ENCODE measurements at regions of chr7 and their contacts with region 1.

Region 1: DNA sequence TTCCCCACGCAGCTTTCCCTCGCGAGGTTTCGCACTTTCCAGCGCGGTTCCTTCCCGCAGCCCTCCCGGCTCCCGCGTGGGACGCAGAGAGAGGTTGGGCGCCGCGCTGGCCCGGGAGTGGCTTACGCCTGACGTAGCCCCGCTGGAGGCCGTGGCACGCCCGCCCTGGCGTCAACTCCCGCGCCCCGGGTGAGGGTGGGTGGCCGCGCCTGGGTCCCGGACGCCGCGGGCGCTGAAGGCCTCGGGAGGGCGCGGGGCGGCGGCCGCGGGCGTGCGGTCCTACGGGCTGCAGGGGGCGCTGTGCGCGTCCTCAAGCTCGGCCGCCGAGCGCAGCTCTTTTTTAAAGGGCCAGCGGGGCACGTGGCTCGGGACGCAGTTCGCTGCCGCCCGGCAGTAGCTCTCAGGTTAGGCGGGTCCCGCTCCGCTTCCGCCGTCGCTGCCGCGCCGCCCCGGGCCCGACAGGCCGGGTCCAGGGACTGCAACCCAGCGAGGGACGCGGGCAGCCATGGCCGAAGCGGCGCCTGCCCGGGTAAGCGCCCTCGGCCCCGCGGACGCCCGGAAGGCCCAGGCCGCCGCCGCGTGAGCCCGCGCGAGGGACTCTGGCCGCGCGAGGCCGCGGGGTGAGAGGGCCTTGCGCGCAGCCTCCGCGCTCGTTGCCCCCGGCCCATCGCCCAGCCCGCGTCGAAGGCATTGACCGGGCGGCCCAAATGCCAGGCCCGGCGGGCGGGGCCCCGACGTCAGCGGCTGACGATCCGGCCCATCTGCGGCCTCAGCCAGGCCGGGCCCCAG is at the start of gene ZNF783:
- DNase-seq: peak; percentile 16
- H3K4me3 ChIP-seq: peak within 1 kb of the TSS; percentile 63
- CTCF ChIP-seq: peak; percentile 66

Region 2: DNA sequence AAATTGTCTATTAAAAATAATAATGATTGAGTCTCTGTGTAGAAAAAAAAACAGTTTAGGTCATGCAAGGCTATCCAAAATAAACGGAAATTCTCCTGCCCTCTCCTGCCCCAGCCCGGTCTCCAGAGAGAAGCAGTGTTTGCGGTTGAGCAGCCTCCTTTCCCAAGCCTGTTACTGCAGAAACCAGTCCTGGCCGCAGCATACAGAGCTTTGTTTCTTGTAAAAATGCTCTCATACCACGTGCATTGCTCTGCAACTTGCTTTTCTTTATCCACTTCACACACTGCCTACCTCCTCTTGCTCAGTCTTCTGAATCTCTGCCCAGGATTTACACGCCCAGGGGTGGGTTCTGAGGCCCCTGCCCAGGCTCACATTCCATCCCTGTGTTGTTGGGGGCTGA is 597.7 kb before region 1 on chr7:
- CTCF ChIA-PET with region 1: no interaction called
- POLR2A ChIA-PET with region 1: no interaction called
- DNase-seq: no peak
- H3K4me3 ChIP-seq: no peak overlapping the region
- CTCF ChIP-seq: no peak

Region 3: GRCh38 chr7:149229526-149229925 is 32.5 kb before region 1 on chr7:
- CTCF ChIA-PET with region 1: interaction called, 12 read pairs
- POLR2A ChIA-PET with region 1: interaction called, 13 read pairs
- DNase-seq: no peak
- H3K4me3 ChIP-seq: no peak overlapping the region
- CTCF ChIP-seq: no peak

Region 4: GRCh38 chr7:149239345-149240191 is 22.5 kb before region 1 on chr7 and contains the start of gene ZNF212:
- CTCF ChIA-PET with region 1: interaction called, 20 read pairs
- POLR2A ChIA-PET with region 1: interaction called, 3 read pairs
- DNase-seq: peak; percentile 26
- H3K4me3 ChIP-seq: peak within 1 kb of the TSS; percentile 95
- CTCF ChIP-seq: peak; percentile 99

Region 5: GRCh38 chr7:149245244-149245643 is 16.8 kb before region 1 on chr7:
- CTCF ChIA-PET with region 1: interaction called, 40 read pairs
- POLR2A ChIA-PET with region 1: interaction called, 5 read pairs
- DNase-seq: no peak
- H3K4me3 ChIP-seq: no peak overlapping the region
- CTCF ChIP-seq: no peak

Region 6: GRCh38 chr7:149278396-149279045 is 16.5 kb after region 1 on chr7:
- CTCF ChIA-PET with region 1: interaction called, 11 read pairs
- POLR2A ChIA-PET with region 1: no interaction called
- DNase-seq: no peak
- H3K4me3 ChIP-seq: no peak overlapping the region
- CTCF ChIP-seq: no peak

Region 7: GRCh38 chr7:149284850-149285626 is 23.0 kb after region 1 on chr7:
- CTCF ChIA-PET with region 1: interaction called, 13 read pairs
- POLR2A ChIA-PET with region 1: interaction called, 9 read pairs
- DNase-seq: peak; percentile 19
- H3K4me3 ChIP-seq: peak overlapping the region; percentile 71
- CTCF ChIP-seq: no peak

Measured in AG04449 (cell line).